Ascending aorta (tissue), 2 donors: ENCODE measurements at regions of chr12 and their contacts with region 1.

Region 1: GRCh38 chr12:122265931-122266771 is at the start of gene VPS33A:
- DNase-seq: peak; percentile 83 to 99
- H3K4me3 ChIP-seq: peak within 1 kb of the TSS; percentile 92 to 96
- H3K27ac ChIP-seq: peak within 1 kb of the TSS; percentile 84 to 88
- H3K4me1 ChIP-seq: peaks cover 0 to 8% of the 10 kb centered on the region in 2 donors
- H3K27me3 ChIP-seq: no peaks in the 10 kb centered on the region
- CTCF ChIP-seq: no peak
- total RNA-seq, gene VPS33A: 8.1 TPM

Region 2: GRCh38 chr12:122225683-122226407 is 40.3 kb before region 1 on chr12 and contains the start of gene DIABLO:
- intact Hi-C with region 1: loop called (anchors 1 kb)
- DNase-seq: peak; percentile 99 to 100
- H3K4me3 ChIP-seq: peak within 1 kb of the TSS; percentile 63 to 82
- H3K27ac ChIP-seq: peak within 1 kb of the TSS; percentile 91
- H3K4me1 ChIP-seq: peaks cover 10 to 17% of the 10 kb centered on the region in 2 donors
- H3K27me3 ChIP-seq: no peaks in the 10 kb centered on the region
- CTCF ChIP-seq: peak in 1 of 3 experiments; percentile 5
- total RNA-seq, gene DIABLO: 54.8 TPM

Region 3: DNA sequence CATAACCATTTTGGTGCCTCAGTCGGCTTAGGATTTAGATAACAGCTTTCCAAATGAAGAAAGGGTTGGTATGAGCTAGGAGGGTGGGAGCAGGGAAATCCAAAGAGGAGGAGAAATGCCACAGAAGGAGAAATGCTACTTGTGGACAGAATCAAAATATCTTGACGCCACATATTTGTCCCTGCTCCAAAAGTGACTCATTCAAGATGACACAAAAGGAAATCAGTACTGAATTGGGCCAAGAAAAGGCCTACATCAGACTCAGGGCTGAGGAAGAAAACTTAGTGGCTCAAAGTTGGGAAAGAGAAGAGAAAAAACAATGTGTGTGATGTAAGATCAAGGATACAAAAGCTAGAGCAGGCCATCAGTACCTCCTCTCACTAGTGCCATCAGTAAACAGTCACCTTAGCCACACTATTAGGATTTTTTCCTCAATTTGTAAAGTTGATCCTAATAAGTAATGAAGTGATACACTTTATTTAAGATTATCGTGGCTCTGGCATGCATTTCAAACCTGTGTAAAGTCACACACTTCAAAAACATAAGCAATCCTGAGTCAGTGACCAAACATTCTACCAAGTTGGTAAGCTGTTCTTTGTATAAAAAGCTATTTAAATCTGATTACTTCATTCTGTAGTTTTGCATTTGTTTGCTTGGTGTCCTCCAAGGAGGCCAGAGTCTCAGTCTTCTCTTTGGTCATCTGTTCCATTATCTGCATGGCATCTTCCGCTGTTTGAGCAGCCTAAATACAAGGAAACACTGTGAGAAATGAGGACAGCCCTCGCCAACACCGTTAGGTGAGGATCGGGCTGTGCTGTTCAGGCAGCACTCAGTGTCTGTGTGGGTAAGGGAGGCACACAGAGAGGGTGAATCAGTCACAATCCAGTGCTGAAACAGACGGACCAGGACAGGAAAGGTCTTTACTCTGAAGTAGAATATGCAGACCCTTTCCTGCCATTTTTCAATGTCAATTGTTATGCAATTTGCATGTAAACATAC is 52.8 kb after region 1 on chr12:
- intact Hi-C with region 1: loop called (anchors 2 kb)
- DNase-seq: peak in 1 of 2 donors; percentile 79
- H3K4me3 ChIP-seq: no peak overlapping the region
- H3K27ac ChIP-seq: peak overlapping the region; percentile 86 to 88
- H3K4me1 ChIP-seq: peaks cover 9 to 20% of the 10 kb centered on the region in 2 donors
- H3K27me3 ChIP-seq: no peaks in the 10 kb centered on the region
- CTCF ChIP-seq: no peak

Region 4: GRCh38 chr12:122356192-122356635 is 90.1 kb after region 1 on chr12:
- intact Hi-C with region 1: loop called (anchors 10 kb)
- DNase-seq: no peak
- H3K4me3 ChIP-seq: no peak overlapping the region
- H3K27ac ChIP-seq: no peak overlapping the region
- H3K4me1 ChIP-seq: no peaks in the 10 kb centered on the region
- H3K27me3 ChIP-seq: no peaks in the 10 kb centered on the region
- CTCF ChIP-seq: peak; percentile 60 to 80 (median 72)

Region 5: GRCh38 chr12:122500685-122501488 is 234.7 kb after region 1 on chr12 and contains the start of gene ZCCHC8:
- intact Hi-C with region 1: loop called (anchors 2 kb)
- DNase-seq: peak; percentile 92 to 97
- H3K4me3 ChIP-seq: peak within 1 kb of the TSS; percentile 78 to 88
- H3K27ac ChIP-seq: peak within 1 kb of the TSS; percentile 97 to 99
- H3K4me1 ChIP-seq: peaks cover 7 to 9% of the 10 kb centered on the region in 2 donors
- H3K27me3 ChIP-seq: no peaks in the 10 kb centered on the region
- CTCF ChIP-seq: no peak
- total RNA-seq, gene ZCCHC8: 6.4 TPM

Region 6: DNA sequence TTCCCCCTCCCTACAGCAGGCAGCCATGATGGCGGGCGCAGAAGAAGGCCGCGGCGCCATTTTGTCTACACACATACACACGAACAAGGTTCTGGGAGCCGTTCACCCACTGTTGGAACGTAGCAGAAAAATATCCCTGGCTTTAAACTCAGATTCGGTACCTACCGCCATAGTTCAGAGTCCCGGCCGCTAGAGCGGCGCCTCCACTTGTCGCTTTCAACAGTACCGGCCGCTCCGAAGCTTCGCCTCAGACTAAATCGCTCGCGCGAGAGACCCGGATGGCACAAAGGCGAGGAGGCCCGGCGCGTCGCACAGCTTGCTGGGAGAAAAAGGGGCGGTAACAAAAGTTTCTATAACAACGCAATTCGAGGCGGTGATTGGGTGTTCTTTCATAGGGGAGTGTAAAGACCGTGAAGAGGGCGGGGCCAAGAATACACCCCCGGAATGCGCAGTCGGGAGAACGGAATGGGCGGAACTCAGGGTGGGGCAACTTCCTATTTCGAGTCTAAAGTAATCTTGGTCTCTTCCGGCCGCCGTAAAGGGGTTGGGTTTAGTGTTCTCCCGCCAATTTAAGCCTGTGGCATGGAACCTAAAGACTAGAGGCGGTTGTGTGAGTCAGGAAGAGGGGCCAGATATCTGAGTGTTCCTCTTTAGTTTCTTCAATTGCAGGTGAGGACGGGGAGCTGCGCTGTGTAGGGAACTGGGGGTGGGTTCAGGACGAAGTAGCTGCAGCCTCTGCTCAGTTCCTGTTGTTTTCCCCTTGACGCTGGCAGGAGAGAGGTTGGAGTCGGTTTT is 260.7 kb after region 1 on chr12 and contains the starts of genes KNTC1 and RSRC2:
- intact Hi-C with region 1: loop called (anchors 1 kb)
- DNase-seq: peak; percentile 97 to 100
- H3K4me3 ChIP-seq: peak within 1 kb of the TSS; percentile 89 to 96
- H3K27ac ChIP-seq: peak within 1 kb of the TSS; percentile 99
- H3K4me1 ChIP-seq: peaks cover 14 to 27% of the 10 kb centered on the region in 2 donors
- H3K27me3 ChIP-seq: no peaks in the 10 kb centered on the region
- CTCF ChIP-seq: no peak
- total RNA-seq, gene KNTC1: 10.5 TPM
- total RNA-seq, gene RSRC2: 44.8 TPM

Region 7: DNA sequence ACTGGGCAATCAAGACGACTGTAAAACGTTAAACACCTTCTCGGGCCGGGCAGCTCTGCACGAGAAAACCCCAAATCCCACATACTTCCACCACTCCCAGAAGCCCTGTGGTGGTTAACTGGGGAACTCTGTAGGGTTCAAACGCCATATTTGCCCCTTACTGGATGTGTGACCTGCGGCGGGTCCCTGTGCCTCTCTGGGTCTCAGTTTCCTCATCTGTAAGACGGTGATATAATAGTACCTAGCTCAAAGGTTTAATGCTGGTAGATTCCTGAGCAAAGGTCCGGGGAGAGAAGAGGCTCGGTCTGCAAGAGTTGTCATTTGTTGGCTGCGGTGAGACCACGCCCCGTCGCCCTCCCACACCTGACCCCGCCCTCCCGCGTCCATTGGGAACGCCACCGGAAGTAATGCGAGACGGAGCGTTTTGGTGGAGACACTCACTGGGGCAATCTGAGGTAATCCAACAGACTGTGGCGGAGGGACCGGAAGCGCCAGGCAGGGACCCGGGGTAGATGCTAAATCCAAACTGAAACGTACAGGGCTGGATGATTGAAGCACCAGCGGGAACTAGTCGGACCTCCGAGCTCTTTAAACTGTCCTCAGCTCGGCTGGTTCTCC is 708.2 kb after region 1 on chr12:
- intact Hi-C with region 1: loop called (anchors 10 kb)
- DNase-seq: peak; percentile 94 to 99
- H3K4me3 ChIP-seq: peak overlapping the region; percentile 86 to 96
- H3K27ac ChIP-seq: peak overlapping the region; percentile 94 to 99
- H3K4me1 ChIP-seq: peaks cover 8 to 28% of the 10 kb centered on the region in 2 donors
- H3K27me3 ChIP-seq: no peaks in the 10 kb centered on the region
- CTCF ChIP-seq: no peak